Posterior cingulate gyrus (tissue), 11 donors: ENCODE measurements at regions of chr19 and their contacts with region 1.

Region 1: DNA sequence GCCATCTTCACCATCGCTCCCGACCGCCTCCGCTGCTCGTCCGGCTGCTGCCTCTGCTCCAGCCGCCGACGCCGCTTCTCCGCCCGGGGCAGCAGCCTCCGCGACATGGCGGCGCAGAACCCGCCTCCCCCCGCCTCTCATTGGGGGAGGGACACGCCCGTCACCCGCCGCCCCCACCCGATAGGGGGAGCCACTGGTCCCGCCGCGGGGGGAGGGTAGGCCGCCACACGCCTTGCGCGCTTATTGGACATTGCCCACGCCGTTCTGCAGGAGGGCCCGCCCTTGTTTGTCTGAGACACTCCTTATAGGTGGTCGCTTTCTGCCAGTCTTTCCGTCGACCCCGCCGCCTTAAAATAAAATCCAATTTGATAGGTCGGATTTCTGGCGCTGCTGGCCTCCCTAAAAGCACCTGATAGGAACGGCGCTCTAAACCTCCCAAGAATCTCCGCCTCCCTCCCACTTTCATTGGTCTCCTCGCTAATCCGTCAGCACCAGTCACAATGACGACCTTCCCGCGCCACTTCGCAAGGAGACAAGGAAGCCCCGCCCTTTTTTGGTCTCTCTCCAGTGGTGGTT is at the start of gene HNRNPL:
- DNase-seq: peak; percentile 98 to 100 (median 100)

Region 2: DNA sequence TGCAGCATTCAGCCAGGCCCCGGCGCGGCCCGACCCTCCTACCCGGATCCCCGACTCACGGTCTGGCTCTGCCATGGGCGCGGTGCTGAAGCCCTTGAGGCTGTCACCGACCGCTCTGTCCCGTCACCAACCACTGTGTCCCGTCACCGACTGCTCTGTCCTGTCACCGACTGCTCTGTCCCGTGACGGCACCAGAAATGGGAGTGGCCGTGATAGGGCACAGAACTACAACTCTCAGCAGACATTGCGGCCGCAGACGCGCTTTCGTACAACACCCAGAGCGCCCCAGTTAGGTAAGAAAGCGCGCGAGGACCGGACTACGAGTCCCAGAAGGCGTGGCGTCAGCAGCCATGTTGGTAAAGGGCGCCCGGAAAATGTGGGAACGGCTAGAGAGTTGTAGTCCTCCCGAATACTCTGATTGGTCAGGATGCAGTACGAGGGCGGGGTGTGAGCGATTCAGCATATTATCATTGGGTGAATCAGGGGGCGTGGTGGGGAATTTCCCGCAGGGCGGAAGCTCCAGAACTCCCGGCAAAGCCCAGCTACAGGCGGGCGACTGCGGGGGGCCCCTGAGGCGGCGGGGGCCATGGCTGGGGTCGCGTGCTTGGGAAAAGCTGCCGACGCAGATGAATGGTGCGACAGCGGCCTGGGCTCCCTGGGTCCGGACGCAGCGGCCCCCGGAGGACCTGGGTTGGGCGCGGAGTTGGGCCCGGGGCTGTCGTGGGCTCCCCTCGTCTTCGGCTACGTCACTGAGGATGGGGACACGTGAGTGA is 49.7 kb after region 1 on chr19 and contains the starts of genes NFKBIB and SIRT2:
- intact Hi-C with region 1: loop called (anchors 1 kb)
- DNase-seq: peak; percentile 99 to 100 (median 100)